ENCODE measurements at regions of chr14 and their contacts with region 1.

Region 1: DNA sequence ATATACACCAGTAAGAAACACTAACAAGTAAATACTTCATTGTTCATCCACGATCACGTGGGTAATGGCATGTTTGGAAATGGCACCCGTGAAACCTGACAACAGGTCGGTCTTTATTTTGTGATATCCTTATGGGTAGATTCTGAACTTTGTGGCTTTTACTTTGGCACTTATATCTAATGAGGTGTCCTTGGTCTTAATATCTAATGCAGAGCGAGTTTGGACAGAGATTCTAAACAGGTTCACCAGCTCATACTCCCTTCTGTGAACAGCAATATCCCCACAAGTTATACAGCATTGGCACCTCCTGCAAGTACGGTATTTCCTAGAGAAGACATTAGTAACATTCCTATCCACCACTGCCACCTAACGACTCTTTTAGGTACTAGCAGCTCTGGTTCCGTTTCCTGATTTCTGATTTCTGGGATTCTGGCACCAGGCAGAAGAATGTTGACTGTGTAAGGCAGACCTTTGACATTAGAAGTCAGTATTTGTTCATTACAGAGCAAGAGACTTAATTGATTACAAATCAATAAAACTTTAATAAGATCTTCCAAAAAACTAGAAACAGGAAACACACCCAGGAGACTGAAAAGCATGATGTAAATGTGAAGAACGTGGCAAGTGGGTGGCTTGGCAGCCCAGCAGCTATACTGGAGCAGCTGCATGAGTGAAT is 2.4 kb downstream of the ANG start:
- DNase-seq: peak; percentile 29 to 53
- H3K4me3 ChIP-seq: no peak overlapping the region
- H3K27ac ChIP-seq: no peak overlapping the region
- H3K4me1 ChIP-seq: no peaks in the 10 kb centered on the region
- H3K27me3 ChIP-seq: no peaks in the 10 kb centered on the region
- CTCF ChIP-seq: peak; percentile 79

Region 2: DNA sequence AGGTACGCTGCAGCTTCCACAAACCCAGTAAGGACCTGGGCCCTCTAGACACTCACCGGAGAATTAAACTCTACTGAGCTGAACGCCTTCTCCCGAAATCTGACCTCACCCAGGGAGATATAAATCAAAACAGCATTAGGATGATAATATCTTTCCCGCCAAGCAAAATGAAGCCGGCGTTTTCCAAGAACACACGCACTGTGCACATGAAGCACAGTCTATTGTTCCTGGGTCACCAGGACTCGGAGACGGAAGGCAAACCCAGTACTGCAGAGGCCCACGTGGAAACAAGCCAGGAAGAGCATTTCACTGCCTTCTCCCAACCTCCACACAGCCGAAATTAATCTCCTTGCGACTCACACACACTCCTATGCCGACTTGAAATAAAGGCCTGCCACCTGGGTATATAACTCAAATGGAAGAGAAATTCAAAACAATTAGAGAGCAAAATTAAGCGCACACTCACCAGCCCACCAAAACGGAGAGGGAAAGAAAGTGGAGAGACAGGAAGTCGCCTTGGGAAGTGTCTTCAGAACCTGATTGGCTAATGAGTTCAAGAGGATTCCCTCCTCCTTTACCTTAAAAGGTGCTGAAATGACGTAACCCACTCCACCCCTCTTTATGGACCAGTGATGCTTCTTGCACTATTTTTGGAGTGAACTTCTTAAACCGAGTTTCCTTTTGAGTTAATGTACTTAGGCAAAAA is 358.0 kb before region 1 on chr14 and contains the start of gene CCNB1IP1:
- CTCF ChIA-PET with region 1: no interaction called
- POLR2A ChIA-PET with region 1: no interaction called
- intact Hi-C with region 1: no loop called
- DNase-seq: peak; percentile 42 to 84
- H3K4me3 ChIP-seq: peak within 1 kb of the TSS; percentile 88
- H3K27ac ChIP-seq: peak within 1 kb of the TSS; percentile 56
- H3K4me1 ChIP-seq: peaks cover 12% of the 10 kb centered on the region; the same call in 1 of the 2 replicates
- H3K27me3 ChIP-seq: no peaks in the 10 kb centered on the region
- CTCF ChIP-seq: no peak
- total RNA-seq, gene CCNB1IP1: 30.8 and 34.0 TPM in 2 replicates

Region 3: GRCh38 chr14:20662968-20663732 is 27.8 kb before region 1 on chr14:
- CTCF ChIA-PET with region 1: interaction called, 9 read pairs
- POLR2A ChIA-PET with region 1: no interaction called
- intact Hi-C with region 1: loop called (anchors 1 kb)
- DNase-seq: peak; percentile 53 to 55
- H3K4me3 ChIP-seq: peak overlapping the region; percentile 54; the same call in 1 of the 2 replicates
- H3K27ac ChIP-seq: no peak overlapping the region
- H3K4me1 ChIP-seq: no peaks in the 10 kb centered on the region; the same call in 1 of the 2 replicates
- H3K27me3 ChIP-seq: no peaks in the 10 kb centered on the region
- CTCF ChIP-seq: peak; percentile 60

Measured in PC-9 (cell line).